ENCODE measurements at regions of chr3 and their contacts with region 1.

Region 1: DNA sequence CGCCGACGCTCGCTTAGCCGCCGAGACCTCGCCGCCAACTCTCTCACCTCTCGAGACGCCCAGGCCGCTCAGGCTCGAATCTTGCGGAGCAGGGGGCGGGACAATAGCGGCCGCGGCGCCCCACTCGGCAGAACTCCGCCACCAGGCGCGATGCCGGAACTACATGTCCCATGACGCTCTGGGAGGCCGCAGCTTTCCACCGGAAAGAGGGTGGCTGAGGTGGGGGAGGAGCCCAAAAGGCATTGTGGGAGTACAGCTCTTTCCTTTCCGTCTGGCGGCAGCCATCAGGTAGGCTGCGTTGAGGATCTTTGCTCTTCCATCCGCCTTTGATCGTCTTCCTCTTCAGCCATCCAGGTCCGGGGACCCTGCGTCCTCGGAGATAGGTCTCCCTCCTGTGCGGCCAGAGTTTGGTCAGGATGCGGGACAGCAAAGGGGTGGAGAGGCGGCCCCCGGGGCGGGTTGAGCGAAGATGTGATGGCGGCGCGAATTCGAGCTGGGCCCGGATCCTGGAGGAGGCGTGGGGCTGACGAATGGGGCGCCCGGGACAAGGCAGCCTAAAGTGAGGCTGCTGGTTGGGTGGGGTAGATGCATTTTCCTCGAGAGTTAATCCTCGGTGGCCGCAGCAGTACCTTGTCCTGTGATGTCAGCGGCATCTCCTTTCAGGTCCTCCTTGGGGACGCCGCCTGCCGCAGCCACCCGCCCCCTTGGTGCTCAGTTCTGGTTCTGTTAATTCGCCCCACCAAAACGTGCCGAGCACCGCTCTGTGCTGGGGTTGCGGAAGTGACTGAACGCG is at the starts of genes NKIRAS1 and RPL15:
- DNase-seq: peak; percentile 97
- H3K4me3 ChIP-seq: peak within 1 kb of the TSS; percentile 73 to 91 (median 90)
- H3K27ac ChIP-seq: peak within 1 kb of the TSS; percentile 85
- H3K4me1 ChIP-seq: peaks cover 16% of the 10 kb centered on the region
- H3K27me3 ChIP-seq: no peaks in the 10 kb centered on the region
- CTCF ChIP-seq: peak in 1 of 2 donors; percentile 55
- total RNA-seq, gene NKIRAS1: 7.3 to 8.8 TPM
- total RNA-seq, gene RPL15: 1,624 to 2,052 TPM

Region 2: DNA sequence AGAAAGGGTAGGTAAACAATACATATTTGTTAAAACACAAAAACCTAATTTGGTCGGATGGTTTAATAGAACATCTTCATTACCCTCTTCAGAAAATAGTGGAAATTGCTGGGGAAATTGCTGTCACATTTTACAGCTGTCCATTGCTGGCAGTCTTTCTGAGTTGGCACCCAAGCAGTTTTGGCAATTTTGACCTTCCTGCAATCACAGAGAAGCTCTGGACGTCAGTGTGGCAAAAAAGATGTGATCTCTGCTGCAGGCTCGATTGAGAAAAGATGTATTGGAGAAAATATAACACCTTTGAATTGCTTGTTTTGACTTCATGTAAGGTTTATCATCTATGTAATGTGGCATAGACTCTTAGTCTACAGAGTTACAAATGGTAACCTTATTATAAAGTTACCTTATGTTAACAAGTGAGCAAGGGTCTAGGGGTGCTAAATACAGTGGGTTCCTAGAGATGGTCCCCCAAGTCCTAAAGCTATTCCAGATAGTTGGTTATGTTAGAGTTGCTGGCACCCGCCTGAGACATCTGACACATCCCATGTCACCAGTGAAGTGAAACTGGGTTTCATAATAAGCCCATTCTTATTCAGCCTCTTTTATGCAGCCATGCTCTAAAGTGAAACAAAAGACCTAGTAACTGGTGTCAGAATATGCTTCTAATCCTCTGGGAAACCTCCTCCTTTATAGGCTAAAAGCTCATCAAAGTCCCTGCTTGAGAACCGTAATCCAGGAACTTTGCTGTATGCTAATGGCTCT is 97.3 kb before region 1 on chr3:
- CTCF ChIA-PET with region 1: no interaction called
- dilution Hi-C with region 1: no loop called
- in situ Hi-C with region 1: no loop called
- intact Hi-C with region 1: no loop called
- DNase-seq: no peak
- H3K4me3 ChIP-seq: no peak overlapping the region
- H3K27ac ChIP-seq: no peak overlapping the region
- H3K4me1 ChIP-seq: peaks cover 1% of the 10 kb centered on the region
- H3K27me3 ChIP-seq: no peaks in the 10 kb centered on the region
- CTCF ChIP-seq: no peak

Region 3: GRCh38 chr3:23834082-23834870 is 82.8 kb before region 1 on chr3:
- CTCF ChIA-PET with region 1: interaction called, 3 read pairs
- dilution Hi-C with region 1: no loop called
- in situ Hi-C with region 1: no loop called
- intact Hi-C with region 1: loop called (anchors 1 kb)
- DNase-seq: no peak
- H3K4me3 ChIP-seq: no peak overlapping the region
- H3K27ac ChIP-seq: no peak overlapping the region
- H3K4me1 ChIP-seq: peaks cover 15% of the 10 kb centered on the region
- H3K27me3 ChIP-seq: no peaks in the 10 kb centered on the region
- CTCF ChIP-seq: peak; percentile 4 to 49

Region 4: DNA sequence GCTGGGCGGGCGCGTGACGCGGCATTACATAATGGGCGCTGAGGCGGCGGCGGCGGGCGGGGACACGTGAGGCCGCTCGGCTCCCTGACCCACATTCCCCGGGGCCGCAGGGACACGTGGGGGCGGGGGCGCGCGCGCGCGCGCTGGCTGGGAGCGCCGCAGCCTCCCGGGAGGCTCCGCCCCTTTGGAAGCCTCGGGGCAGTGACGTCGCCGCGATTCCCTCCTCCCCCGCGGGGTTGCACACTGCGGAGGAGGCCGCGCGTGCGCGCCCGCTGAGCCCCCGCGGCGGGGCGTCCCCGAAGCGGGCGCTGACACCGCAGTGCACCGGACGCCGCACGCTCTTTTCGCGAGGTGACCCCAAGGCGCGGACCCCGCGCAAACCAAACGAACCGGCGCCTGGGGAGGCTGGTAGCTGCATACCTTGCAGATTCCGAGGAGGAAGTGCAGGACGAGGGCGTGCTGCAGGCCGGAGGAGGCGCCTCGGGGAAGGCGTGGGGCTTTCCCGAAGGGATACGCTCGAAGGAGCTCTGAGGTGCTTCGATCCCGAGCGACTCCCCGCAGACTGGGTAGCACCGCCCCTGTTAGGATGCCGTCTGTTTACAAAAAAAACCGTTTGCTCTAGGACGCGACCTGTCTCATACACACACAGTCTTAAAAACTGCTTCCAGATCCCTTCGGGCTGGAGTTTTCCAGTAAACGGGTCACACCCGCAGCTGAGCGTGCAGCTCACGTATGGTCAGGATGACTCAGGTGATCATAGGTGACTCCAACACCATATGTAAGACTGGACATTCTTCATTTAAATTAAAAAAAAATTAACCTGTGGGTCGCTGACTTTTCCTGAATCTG is 29.0 kb after region 1 on chr3:
- CTCF ChIA-PET with region 1: no interaction called
- dilution Hi-C with region 1: no loop called
- in situ Hi-C with region 1: no loop called
- intact Hi-C with region 1: loop called (anchors 1 kb)
- DNase-seq: peak; percentile 96
- H3K4me3 ChIP-seq: peak overlapping the region; percentile 40 to 68 (median 65)
- H3K27ac ChIP-seq: peak overlapping the region; percentile 89
- H3K4me1 ChIP-seq: peaks cover 35% of the 10 kb centered on the region
- H3K27me3 ChIP-seq: no peaks in the 10 kb centered on the region
- CTCF ChIP-seq: no peak

Measured in mammary epithelial cell (primary cell).